HCT116 (cell line): ENCODE measurements at regions of chr13 and their contacts with region 1.

Region 1: DNA sequence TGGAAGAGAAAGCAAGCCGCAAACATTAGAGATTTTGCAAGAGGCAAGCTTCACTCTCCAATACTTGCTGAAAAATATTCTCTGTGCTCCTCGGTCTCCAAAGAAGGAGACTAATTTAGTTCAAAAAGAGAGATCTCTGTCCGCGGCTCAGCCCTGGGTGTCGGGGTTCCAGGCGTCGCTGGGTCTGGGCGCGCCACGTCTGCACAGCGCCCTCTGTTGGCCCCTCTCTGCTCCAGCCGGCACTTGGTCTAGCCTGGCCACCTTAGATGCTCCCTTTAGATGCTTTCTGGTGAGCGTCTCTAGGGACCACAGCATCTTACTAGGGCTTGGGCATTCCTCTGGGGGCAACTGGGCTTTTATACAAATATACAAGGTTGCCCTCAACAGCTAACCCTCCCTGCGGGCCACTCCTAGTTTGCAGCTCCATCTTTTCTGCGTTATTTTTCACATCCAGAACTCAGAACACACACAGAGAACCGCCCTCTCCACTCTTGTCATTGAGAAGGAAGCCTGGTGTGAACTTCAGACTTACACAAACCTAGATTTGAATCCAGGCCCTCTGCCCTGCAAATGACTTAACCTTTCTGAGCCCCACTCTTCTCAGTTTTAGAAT is 78.3 kb downstream of the CYSLTR2 start:
- DNase-seq: peak; percentile 28
- ATAC-seq: peak; percentile 98
- H3K4me3 ChIP-seq: peak overlapping the region in 1 of 2 experiments; percentile 28; a peak in 3 of 4 replicates
- H3K27ac ChIP-seq: no peak overlapping the region
- H3K4me1 ChIP-seq: peaks cover 0 to 5% of the 10 kb centered on the region in 2 experiments; a peak in 1 of 4 replicates
- H3K27me3 ChIP-seq: no peaks in the 10 kb centered on the region
- CTCF ChIP-seq: peak; percentile 46 to 96 (median 92); a peak in 5 of 6 replicates
- POLR2A ChIP-seq: no peak
- RAD21 ChIP-seq: peak; percentile 61

Region 2: GRCh38 chr13:48334534-48335127 is 397.4 kb before region 1 on chr13:
- CTCF ChIA-PET with region 1: no interaction called
- POLR2A ChIA-PET with region 1: no interaction called
- RAD21 ChIA-PET with region 1: no interaction called
- intact Hi-C with region 1: loop called (anchors 10 kb)
- DNase-seq: peak; percentile 19
- ATAC-seq: peak; percentile 67
- H3K4me3 ChIP-seq: no peak overlapping the region
- H3K27ac ChIP-seq: no peak overlapping the region
- H3K4me1 ChIP-seq: no peaks in the 10 kb centered on the region
- H3K27me3 ChIP-seq: no peaks in the 10 kb centered on the region
- CTCF ChIP-seq: peak; percentile 37 to 72 (median 42); a peak in 5 of 6 replicates
- POLR2A ChIP-seq: no peak
- RAD21 ChIP-seq: peak; percentile 69

Region 3: GRCh38 chr13:49821216-49822030 is 1089.4 kb after region 1 on chr13:
- CTCF ChIA-PET with region 1: no interaction called
- POLR2A ChIA-PET with region 1: no interaction called
- RAD21 ChIA-PET with region 1: no interaction called
- intact Hi-C with region 1: no loop called
- DNase-seq: no peak
- ATAC-seq: peak; percentile 76
- H3K4me3 ChIP-seq: no peak overlapping the region
- H3K27ac ChIP-seq: no peak overlapping the region
- H3K4me1 ChIP-seq: no peaks in the 10 kb centered on the region
- H3K27me3 ChIP-seq: no peaks in the 10 kb centered on the region
- CTCF ChIP-seq: peak in 2 of 3 experiments; percentile 32 to 34; a peak in 2 of 6 replicates
- POLR2A ChIP-seq: no peak
- RAD21 ChIP-seq: peak; percentile 13; the same call in 1 of the 2 replicates